Aorta (tissue), 5 donors: ENCODE measurements at regions of chr14 and their contacts with region 1.

Region 1: GRCh38 chr14:77868552-77869285 is 68.8 kb downstream of the ADCK1 start:
- DNase-seq: no peak
- ATAC-seq: no peak
- H3K4me3 ChIP-seq: no peak overlapping the region
- H3K27ac ChIP-seq: no peak overlapping the region
- H3K4me1 ChIP-seq: no peaks in the 10 kb centered on the region
- H3K27me3 ChIP-seq: no peaks in the 10 kb centered on the region

Region 2: GRCh38 chr14:77903221-77903620 is 34.5 kb after region 1 on chr14:
- intact Hi-C with region 1: no loop called
- DNase-seq: no peak
- ATAC-seq: no peak
- H3K4me3 ChIP-seq: no peak overlapping the region
- H3K27ac ChIP-seq: no peak overlapping the region
- H3K4me1 ChIP-seq: no peaks in the 10 kb centered on the region
- H3K27me3 ChIP-seq: no peaks in the 10 kb centered on the region

Region 3: DNA sequence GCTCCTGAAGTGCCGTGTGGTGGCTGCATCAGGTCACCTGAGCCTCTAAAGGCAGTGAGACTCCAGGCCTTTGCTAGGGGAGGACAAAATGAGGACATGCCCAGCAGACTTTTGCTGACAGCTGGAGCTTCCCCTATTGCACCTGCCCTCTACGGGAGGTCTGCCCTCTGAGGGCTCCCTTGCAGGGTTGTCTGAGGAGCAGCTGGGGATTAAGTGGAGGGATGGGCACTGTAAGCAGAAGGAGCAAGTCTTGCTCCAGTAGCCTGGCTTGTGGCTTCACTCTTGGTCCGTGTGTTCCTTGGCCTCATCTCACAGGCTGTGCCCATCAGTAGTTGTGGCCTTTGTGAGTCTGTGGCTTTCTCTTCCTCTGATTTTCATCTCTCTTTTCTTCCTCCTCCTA is 234.6 kb after region 1 on chr14:
- intact Hi-C with region 1: no loop called
- DNase-seq: no peak
- ATAC-seq: no peak
- H3K4me3 ChIP-seq: no peak overlapping the region
- H3K27ac ChIP-seq: no peak overlapping the region
- H3K4me1 ChIP-seq: no peaks in the 10 kb centered on the region
- H3K27me3 ChIP-seq: no peaks in the 10 kb centered on the region

Region 4: DNA sequence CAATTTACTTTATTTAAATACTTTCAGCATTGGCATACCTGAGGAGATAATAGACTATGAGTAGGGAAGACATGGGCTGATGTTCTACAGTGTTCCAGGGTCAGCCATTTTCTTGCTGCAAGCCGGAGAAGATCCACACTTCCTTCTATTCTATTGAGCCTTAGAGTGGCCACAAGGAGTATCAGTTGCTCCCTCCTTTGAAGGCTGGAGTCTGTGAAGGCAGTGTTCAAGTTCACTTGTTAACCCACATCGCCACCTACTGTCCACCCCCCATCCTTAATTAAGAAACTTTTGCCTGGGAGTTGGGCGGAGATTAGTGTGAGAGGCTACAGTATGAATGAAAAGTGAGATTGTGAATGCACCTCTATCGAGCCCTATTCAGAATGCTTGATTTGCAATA is 968.1 kb after region 1 on chr14:
- intact Hi-C with region 1: loop called in 1 of 2 experiments (anchors 5 kb)
- DNase-seq: no peak
- ATAC-seq: no peak
- H3K4me3 ChIP-seq: no peak overlapping the region
- H3K27ac ChIP-seq: no peak overlapping the region
- H3K4me1 ChIP-seq: no peaks in the 10 kb centered on the region
- H3K27me3 ChIP-seq: no peaks in the 10 kb centered on the region